ENCODE measurements at regions of chrX and their contacts with region 1.

Region 1: GRCh38 chrX:154918060-154918483 is 31.9 kb downstream of the F8A1 start:
- DNase-seq: peak in 7 of 9 experiments; percentile 0 to 61 (median 10)
- ATAC-seq: peak; percentile 55
- H3K4me3 ChIP-seq: peak overlapping the region in 1 of 2 experiments; percentile 15
- H3K4me3 Mint-ChIP-seq: peak overlapping the region; percentile 68
- H3K27ac ChIP-seq: no peak overlapping the region
- H3K27ac Mint-ChIP-seq: no peak overlapping the region
- H3K4me1 ChIP-seq: no peaks in the 10 kb centered on the region
- H3K4me1 Mint-ChIP-seq: no peaks in the 10 kb centered on the region
- H3K27me3 ChIP-seq: no peaks in the 10 kb centered on the region
- H3K27me3 Mint-ChIP-seq: peaks cover 5% of the 10 kb centered on the region
- CTCF ChIP-seq: peak; percentile 69

Region 2: DNA sequence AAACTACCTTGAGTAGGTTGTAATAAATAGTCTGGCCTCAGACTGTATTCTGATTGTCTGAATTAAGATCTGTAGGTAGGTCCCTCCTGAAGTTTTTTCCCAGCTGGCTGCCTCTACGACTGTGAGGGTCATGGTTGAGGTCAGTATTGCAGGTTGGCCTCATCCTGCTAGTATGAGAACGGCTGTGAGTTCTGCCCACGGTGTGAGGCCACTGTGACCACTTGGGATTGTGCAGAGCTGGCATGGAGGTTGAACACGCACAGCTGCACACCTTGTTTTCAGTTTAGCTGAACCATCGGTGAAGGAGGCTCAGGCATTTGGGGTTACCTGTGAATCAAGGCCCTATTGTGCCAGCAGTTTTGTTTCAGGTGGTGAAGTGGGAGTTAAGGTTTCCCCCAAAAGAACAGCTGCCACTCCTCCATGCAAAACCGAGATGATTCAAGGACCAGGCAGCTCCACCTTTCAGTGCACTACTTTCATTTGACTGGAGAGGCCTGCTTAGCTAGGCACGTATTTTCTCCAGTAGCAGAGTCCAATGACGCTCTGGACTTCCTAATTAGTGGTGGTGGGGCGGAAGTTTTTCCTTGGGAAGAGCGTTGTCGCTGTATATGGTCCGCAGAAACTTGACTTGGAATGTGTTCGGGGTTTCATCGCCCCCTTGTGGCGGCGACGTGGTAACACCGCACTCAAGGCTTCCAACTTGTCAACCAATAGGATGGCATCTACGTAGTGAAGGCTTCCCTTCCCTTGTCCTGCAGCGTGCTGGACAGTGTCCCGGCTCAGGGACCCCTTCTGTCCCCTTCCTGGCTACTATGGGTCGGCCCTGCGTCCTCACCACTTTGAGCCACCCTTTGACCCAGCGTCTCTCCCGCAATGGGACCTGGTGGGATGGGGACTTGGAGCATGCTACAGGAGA is 139.1 kb after region 1 on chrX:
- CTCF ChIA-PET with region 1: interaction called, 11 read pairs
- POLR2A ChIA-PET with region 1: no interaction called
- intact Hi-C with region 1: loop called (anchors 1 to 10 kb)
- DNase-seq: peak; percentile 4 to 75 (median 40)
- ATAC-seq: peak; percentile 86
- H3K4me3 ChIP-seq: peak overlapping the region; percentile 20 to 31
- H3K4me3 Mint-ChIP-seq: peak overlapping the region; percentile 74
- H3K27ac ChIP-seq: peak overlapping the region in 1 of 2 experiments; percentile 36
- H3K27ac Mint-ChIP-seq: peak overlapping the region; percentile 62
- H3K4me1 ChIP-seq: peaks cover 12% of the 10 kb centered on the region
- H3K4me1 Mint-ChIP-seq: peaks cover 16% of the 10 kb centered on the region
- H3K27me3 ChIP-seq: no peaks in the 10 kb centered on the region
- H3K27me3 Mint-ChIP-seq: no peaks in the 10 kb centered on the region
- CTCF ChIP-seq: peak; percentile 64

Region 3: DNA sequence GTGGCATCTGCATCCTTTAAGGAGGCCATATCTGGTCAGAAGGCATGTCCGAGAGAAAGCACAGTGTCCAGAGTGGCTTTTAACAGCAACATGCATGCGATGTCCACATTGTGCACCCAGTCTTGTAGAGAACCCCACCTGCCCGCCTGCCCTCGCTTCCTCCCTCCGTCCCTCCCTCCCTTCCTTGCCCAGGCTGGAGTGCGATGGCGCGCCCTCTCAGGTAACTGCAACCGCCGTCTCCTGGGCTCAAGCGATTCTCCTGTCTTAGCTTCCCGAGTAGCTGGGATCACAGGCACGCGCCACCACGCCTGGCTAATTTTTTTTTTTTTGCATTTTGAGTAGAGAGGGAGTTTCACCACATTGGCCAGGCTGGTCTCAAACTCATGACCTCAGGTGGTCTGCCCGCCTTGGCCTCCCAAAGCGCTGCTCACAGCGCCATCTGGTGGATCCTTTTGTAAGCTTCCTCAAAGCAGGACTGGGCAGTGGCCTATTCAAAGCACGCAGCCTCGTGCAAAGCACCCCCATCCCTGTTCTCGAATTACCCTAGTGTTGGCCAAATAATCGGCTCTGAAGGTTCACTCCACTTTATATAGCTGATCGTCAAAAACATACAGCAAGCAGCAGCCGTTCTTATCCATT is 168.2 kb after region 1 on chrX:
- CTCF ChIA-PET with region 1: interaction called, 3 read pairs
- POLR2A ChIA-PET with region 1: no interaction called
- intact Hi-C with region 1: loop called in 1 of 2 experiments (anchors 10 kb)
- DNase-seq: peak in 7 of 9 experiments; percentile 20 to 61 (median 34)
- ATAC-seq: peak; percentile 36
- H3K4me3 ChIP-seq: no peak overlapping the region
- H3K4me3 Mint-ChIP-seq: no peak overlapping the region
- H3K27ac ChIP-seq: no peak overlapping the region
- H3K27ac Mint-ChIP-seq: no peak overlapping the region
- H3K4me1 ChIP-seq: no peaks in the 10 kb centered on the region
- H3K4me1 Mint-ChIP-seq: peaks cover 2% of the 10 kb centered on the region
- H3K27me3 ChIP-seq: no peaks in the 10 kb centered on the region
- H3K27me3 Mint-ChIP-seq: no peaks in the 10 kb centered on the region
- CTCF ChIP-seq: peak; percentile 31

Region 4: DNA sequence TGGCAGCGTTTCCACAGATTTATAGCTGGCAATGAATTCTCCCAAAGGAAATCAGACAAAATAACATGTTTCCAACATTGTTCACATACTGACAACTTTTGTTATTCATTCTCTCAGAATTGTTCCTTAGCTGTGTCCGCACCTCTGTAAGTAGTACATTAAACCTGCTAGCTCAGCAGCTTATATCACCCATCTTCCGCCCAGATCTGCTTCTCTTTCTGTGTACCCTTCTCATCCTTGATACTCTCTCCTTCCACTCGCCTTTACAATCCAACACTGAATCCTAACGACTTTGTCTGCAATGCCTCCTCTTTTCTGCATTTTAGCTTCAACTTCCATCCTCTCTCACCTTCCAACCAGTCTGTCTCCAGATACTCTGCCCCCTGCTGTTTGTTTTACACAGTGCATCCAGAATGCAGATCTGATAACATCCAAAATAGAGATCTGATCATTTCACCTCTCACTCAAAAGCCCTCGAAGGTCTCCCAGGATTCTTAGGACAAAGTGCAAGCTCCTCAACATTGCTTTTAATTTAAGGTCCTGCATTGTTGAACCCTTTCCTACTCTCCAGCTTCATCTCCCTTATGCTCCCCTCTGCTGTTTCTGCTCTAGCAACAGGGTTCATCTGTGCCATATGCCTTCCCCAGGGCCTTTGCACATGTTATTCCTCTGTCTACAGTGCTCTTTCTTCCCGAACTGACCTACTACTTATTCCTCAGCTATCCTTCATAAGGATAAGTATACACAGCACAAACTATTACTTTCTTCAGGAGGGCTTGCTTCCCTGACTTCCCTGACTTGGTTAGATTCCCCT is 230.9 kb after region 1 on chrX:
- CTCF ChIA-PET with region 1: interaction called, 7 read pairs
- POLR2A ChIA-PET with region 1: no interaction called
- intact Hi-C with region 1: loop called in 1 of 2 experiments (anchors 5 kb)
- DNase-seq: peak in 5 of 9 experiments; percentile 1 to 41 (median 18)
- ATAC-seq: no peak
- H3K4me3 ChIP-seq: no peak overlapping the region
- H3K4me3 Mint-ChIP-seq: no peak overlapping the region
- H3K27ac ChIP-seq: no peak overlapping the region
- H3K27ac Mint-ChIP-seq: no peak overlapping the region
- H3K4me1 ChIP-seq: no peaks in the 10 kb centered on the region
- H3K4me1 Mint-ChIP-seq: peaks cover 6% of the 10 kb centered on the region
- H3K27me3 ChIP-seq: no peaks in the 10 kb centered on the region
- H3K27me3 Mint-ChIP-seq: no peaks in the 10 kb centered on the region
- CTCF ChIP-seq: peak; percentile 26

Region 5: GRCh38 chrX:155645180-155645579 is 727.1 kb after region 1 on chrX:
- CTCF ChIA-PET with region 1: no interaction called
- POLR2A ChIA-PET with region 1: no interaction called
- intact Hi-C with region 1: loop called in 1 of 2 experiments (anchors 5 kb)
- DNase-seq: no peak
- ATAC-seq: no peak
- H3K4me3 ChIP-seq: no peak overlapping the region
- H3K4me3 Mint-ChIP-seq: no peak overlapping the region
- H3K27ac ChIP-seq: no peak overlapping the region
- H3K27ac Mint-ChIP-seq: no peak overlapping the region
- H3K4me1 ChIP-seq: no peaks in the 10 kb centered on the region
- H3K4me1 Mint-ChIP-seq: peaks cover 6% of the 10 kb centered on the region
- H3K27me3 ChIP-seq: no peaks in the 10 kb centered on the region
- H3K27me3 Mint-ChIP-seq: no peaks in the 10 kb centered on the region
- CTCF ChIP-seq: no peak

Region 6: DNA sequence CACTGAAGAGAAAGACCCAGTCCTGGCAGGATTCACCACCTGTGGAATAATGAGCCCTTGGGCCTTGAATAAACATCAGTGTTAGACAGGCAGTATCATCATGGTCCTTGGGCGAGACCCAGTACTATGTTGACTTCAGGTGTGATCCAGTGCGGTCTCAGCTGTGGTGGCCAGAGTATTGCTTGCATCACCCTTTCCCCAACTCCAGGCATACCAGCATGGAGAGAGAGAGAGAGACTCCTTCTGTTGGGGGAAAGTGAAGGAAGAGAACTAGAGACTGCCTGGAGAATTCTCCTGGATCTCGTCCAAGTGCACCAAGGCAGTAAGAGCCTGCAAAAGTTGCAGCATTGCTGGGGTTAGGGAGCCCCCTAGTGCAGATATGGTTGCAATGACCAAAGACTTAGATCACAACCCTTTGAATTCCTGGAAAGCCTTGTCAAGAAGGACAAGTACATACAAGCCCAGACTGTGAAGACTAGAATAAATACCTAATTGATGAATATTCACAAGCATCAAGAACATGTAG is 902.0 kb after region 1 on chrX:
- CTCF ChIA-PET with region 1: no interaction called
- POLR2A ChIA-PET with region 1: no interaction called
- intact Hi-C with region 1: loop called in 1 of 2 experiments (anchors 1 kb)
- DNase-seq: peak in 7 of 9 experiments; percentile 8 to 62 (median 36)
- ATAC-seq: no peak
- H3K4me3 ChIP-seq: no peak overlapping the region
- H3K4me3 Mint-ChIP-seq: no peak overlapping the region
- H3K27ac ChIP-seq: no peak overlapping the region
- H3K27ac Mint-ChIP-seq: no peak overlapping the region
- H3K4me1 ChIP-seq: no peaks in the 10 kb centered on the region
- H3K4me1 Mint-ChIP-seq: no peaks in the 10 kb centered on the region
- H3K27me3 ChIP-seq: peaks cover 0 to 2% of the 10 kb centered on the region in 2 experiments
- H3K27me3 Mint-ChIP-seq: peaks cover 15% of the 10 kb centered on the region
- CTCF ChIP-seq: peak; percentile 39